Astrocyte of the cerebellum (primary cell): ENCODE measurements at regions of chr7 and their contacts with region 1.

Region 1: GRCh38 chr7:91299952-91300775 is 35.9 kb downstream of the FZD1 start:
- DNase-seq: no peak
- H3K4me3 ChIP-seq: no peak overlapping the region
- CTCF ChIP-seq: no peak

Region 2: GRCh38 chr7:91336106-91336505 is 35.9 kb after region 1 on chr7:
- in situ Hi-C with region 1: loop called (anchors 5 kb)
- DNase-seq: no peak
- H3K4me3 ChIP-seq: no peak overlapping the region
- CTCF ChIP-seq: no peak

Region 3: DNA sequence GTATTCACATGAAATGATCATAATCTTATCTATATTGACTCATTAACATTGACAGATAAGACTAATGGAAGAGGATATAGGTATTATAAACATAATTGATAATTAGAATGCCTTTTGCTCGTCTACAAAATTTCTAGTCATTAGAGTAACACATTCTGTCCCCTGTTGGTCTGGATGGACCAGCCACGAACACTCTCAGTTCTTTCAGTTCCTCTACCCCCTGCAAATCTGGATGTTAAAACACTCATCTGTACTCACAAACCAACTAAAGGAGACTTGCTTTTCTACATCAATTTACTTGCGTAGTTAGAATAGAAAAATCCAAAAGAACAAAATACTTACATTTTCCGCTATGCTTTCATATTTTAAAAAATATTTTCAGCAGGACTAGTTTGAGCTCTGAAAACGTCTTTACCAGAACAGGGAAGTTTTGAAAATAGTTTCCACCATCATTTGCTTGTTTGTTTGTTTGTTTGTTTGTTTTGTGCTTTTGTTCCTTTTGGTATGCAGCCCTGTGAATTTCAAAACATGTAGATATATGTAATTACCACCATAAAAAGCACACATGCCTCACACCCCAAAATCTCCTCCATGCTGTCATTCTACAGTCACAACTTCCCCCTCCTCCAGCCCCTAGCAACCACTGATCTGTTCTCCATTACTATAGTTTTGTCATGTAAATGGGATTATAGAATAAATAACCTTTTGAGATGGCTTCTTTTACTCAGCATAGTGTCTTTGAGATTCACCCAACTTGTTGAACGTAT is 67.8 kb after region 1 on chr7:
- in situ Hi-C with region 1: no loop called
- DNase-seq: no peak
- H3K4me3 ChIP-seq: no peak overlapping the region
- CTCF ChIP-seq: no peak

Region 4: GRCh38 chr7:91512958-91513357 is 212.8 kb after region 1 on chr7:
- in situ Hi-C with region 1: no loop called
- DNase-seq: no peak
- H3K4me3 ChIP-seq: no peak overlapping the region
- CTCF ChIP-seq: no peak